Sciatic nerve (tissue), 2 donors: ENCODE measurements at regions of chr3 and their contacts with region 1.

Region 1: GRCh38 chr3:166052440-166052839 is 215.2 kb upstream of the BCHE start:
- DNase-seq: no peak
- ATAC-seq: no peak

Region 2: GRCh38 chr3:164539215-164539614 is 1513.2 kb before region 1 on chr3:
- intact Hi-C with region 1: no loop called
- DNase-seq: no peak
- ATAC-seq: no peak

Region 3: DNA sequence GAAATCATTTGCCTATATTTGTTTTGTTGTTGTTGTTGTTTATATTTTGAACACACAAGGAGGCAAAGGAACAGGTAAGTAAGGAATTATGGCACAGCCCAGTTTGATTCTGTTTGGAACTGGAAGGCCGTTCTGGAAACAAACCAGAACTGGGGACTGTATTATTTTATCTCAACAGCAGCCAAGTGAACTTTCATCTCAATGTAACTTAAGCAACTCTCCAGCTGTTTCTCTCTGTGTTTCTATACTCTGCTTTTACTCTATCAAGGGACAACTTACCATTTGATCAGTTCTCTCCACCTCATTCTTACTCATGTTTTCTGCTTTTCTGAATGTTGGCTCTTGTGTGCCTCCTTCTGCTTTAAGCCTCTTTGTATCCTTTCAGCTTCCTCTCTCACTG is 1617.3 kb after region 1 on chr3:
- intact Hi-C with region 1: loop called (anchors 5 kb)
- DNase-seq: no peak
- ATAC-seq: no peak